Psoas muscle (tissue), 8 donors: ENCODE measurements at regions of chr1 and their contacts with region 1.

Region 1: DNA sequence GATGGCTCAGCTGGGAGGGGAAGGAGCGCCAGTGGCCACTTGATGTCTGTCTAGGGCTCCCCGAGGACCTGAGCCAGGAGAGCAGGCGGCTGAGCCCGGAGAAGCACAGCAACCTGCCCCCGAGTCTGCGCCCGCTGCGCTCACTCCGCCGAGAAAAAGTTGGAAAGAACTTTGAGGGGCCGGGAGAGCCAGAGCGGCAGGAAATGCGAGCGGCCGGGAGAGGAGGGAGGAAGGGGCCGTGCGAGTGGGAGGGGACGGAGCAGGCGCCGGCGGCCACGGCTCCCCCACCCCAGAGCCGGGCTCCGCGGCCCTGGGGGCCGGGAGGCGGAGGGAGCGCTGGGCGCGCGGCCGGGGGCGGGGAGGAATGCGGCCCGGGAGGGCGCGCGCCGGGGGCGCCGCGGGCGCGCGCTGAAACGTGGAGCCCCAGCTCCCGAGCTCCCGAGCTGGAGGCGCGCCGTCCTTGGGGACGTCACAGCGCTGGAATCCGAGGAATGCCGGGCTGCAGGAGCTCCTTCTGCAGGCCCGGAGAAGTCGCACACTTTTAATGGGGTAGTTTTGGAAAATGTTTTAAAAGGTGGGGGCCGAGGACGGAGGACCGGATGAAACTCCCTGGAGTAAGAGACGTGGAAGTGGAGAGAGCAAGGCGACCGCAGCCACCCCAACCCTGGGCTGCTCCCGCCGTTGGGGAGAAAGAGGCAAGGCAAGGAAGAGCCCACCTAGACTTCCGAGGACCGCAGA is at the start of gene PTPN14:
- DNase-seq: peak; percentile 90 to 94
- ATAC-seq: peak; percentile 83 to 89 (median 88)
- H3K4me3 ChIP-seq: peak within 1 kb of the TSS; percentile 93
- H3K27ac ChIP-seq: peak within 1 kb of the TSS; percentile 95
- H3K4me1 ChIP-seq: peaks cover 32% of the 10 kb centered on the region
- H3K27me3 ChIP-seq: no peaks in the 10 kb centered on the region
- CTCF ChIP-seq: peak; percentile 58
- total RNA-seq, gene PTPN14: 50.8 to 106 (median 63.3) TPM

Region 2: DNA sequence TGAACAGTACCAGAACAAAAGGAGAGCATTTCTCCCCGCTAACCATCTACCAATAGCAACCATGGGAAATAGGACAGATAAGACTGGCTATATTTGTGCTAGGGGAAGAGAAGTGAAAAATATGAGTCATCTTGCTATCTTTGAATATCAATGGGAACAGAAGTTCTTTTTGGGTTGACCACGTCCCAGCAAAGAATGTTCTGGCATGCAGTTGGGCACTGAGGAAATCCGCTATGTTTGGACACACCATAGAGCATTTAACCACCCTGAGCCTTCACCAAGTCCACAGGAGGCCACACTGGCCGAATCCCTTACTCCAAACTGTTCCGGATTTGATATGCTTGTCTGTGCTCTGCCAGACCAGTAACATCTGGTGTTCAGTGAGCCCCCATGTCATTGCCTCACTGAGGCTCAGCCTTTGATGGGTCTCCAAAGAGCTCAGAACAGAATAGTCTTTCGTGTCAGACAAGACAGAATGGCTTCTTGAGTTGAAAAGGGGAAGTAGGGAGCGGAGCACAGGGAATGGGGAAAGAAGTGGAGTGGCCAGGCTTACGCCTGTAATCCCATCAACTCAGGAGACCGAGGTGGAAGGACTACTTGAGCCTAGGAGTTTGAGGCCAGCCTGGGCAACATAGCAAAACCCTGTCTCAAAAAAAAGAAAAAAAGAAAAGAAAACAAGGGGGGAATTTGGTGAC is 189.3 kb before region 1 on chr1:
- intact Hi-C with region 1: loop called (anchors 5 to 10 kb)
- DNase-seq: peak; percentile 51 to 80
- ATAC-seq: peak; percentile 93 to 95 (median 93)
- H3K4me3 ChIP-seq: no peak overlapping the region
- H3K27ac ChIP-seq: peak overlapping the region; percentile 87
- H3K4me1 ChIP-seq: peaks cover 27% of the 10 kb centered on the region
- H3K27me3 ChIP-seq: no peaks in the 10 kb centered on the region
- CTCF ChIP-seq: no peak

Region 3: GRCh38 chr1:214416417-214416816 is 135.2 kb before region 1 on chr1:
- intact Hi-C with region 1: loop called in 1 of 2 experiments (anchors 5 kb)
- DNase-seq: no peak
- ATAC-seq: peak in 3 of 4 donors; percentile 62 to 74 (median 72)
- H3K4me3 ChIP-seq: no peak overlapping the region
- H3K27ac ChIP-seq: peak overlapping the region; percentile 48
- H3K4me1 ChIP-seq: peaks cover 60% of the 10 kb centered on the region
- H3K27me3 ChIP-seq: no peaks in the 10 kb centered on the region
- CTCF ChIP-seq: no peak

Region 4: GRCh38 chr1:214439352-214440119 is 112.1 kb before region 1 on chr1:
- intact Hi-C with region 1: loop called in 1 of 2 experiments (anchors 5 kb)
- DNase-seq: peak in 1 of 2 donors; percentile 21
- ATAC-seq: peak; percentile 86 to 92 (median 89)
- H3K4me3 ChIP-seq: peak overlapping the region; percentile 46
- H3K27ac ChIP-seq: peak overlapping the region; percentile 91
- H3K4me1 ChIP-seq: peaks cover 53% of the 10 kb centered on the region
- H3K27me3 ChIP-seq: no peaks in the 10 kb centered on the region
- CTCF ChIP-seq: no peak

Region 5: GRCh38 chr1:214494706-214495105 is 56.9 kb before region 1 on chr1:
- intact Hi-C with region 1: loop called in 1 of 2 experiments (anchors 5 kb)
- DNase-seq: no peak
- ATAC-seq: peak in 2 of 4 donors; percentile 40 to 62
- H3K4me3 ChIP-seq: no peak overlapping the region
- H3K27ac ChIP-seq: peak overlapping the region; percentile 79
- H3K4me1 ChIP-seq: peaks cover 61% of the 10 kb centered on the region
- H3K27me3 ChIP-seq: no peaks in the 10 kb centered on the region
- CTCF ChIP-seq: no peak

Region 6: GRCh38 chr1:214506972-214507482 is 44.6 kb before region 1 on chr1:
- intact Hi-C with region 1: loop called in 1 of 2 experiments (anchors 5 kb)
- DNase-seq: no peak
- ATAC-seq: no peak
- H3K4me3 ChIP-seq: no peak overlapping the region
- H3K27ac ChIP-seq: no peak overlapping the region
- H3K4me1 ChIP-seq: peaks cover 58% of the 10 kb centered on the region
- H3K27me3 ChIP-seq: no peaks in the 10 kb centered on the region
- CTCF ChIP-seq: no peak

Region 7: GRCh38 chr1:214573386-214574358 is 22.1 kb after region 1 on chr1:
- intact Hi-C with region 1: no loop called
- DNase-seq: no peak
- ATAC-seq: peak; percentile 67 to 88 (median 81)
- H3K4me3 ChIP-seq: peak overlapping the region; percentile 45
- H3K27ac ChIP-seq: peak overlapping the region; percentile 81
- H3K4me1 ChIP-seq: peaks cover 17% of the 10 kb centered on the region
- H3K27me3 ChIP-seq: no peaks in the 10 kb centered on the region
- CTCF ChIP-seq: no peak

Region 8: GRCh38 chr1:214727274-214727673 is 175.7 kb after region 1 on chr1:
- intact Hi-C with region 1: no loop called
- DNase-seq: no peak
- ATAC-seq: no peak
- H3K4me3 ChIP-seq: no peak overlapping the region
- H3K27ac ChIP-seq: no peak overlapping the region
- H3K4me1 ChIP-seq: no peaks in the 10 kb centered on the region
- H3K27me3 ChIP-seq: no peaks in the 10 kb centered on the region
- CTCF ChIP-seq: no peak